ENCODE measurements at regions of chr1 and their contacts with region 1.

Region 1: GRCh38 chr1:20574686-20575540 is 14.0 kb upstream of the CDA start:
- DNase-seq: peak; percentile 80 to 82
- ATAC-seq: peak; percentile 94 to 97
- H3K4me3 ChIP-seq: no peak overlapping the region
- H3K27ac ChIP-seq: peak overlapping the region; percentile 13 to 80; a peak in 4 of 6 replicates
- H3K4me1 ChIP-seq: peaks cover 14% of the 10 kb centered on the region
- CTCF ChIP-seq: peak; percentile 70
- EP300 ChIP-seq: no peak
- POLR2A ChIP-seq: no peak
- RAD21 ChIP-seq: peak; percentile 82 to 90

Region 2: GRCh38 chr1:20589331-20590278 is 14.7 kb after region 1 on chr1:
- CTCF ChIA-PET with region 1: interaction called, 38 read pairs
- POLR2A ChIA-PET with region 1: no interaction called
- DNase-seq: no peak
- ATAC-seq: peak; percentile 35 to 53; a peak in 3 of 6 replicates
- H3K4me3 ChIP-seq: peak overlapping the region; percentile 50
- H3K27ac ChIP-seq: peak overlapping the region; percentile 84 to 92
- H3K4me1 ChIP-seq: peaks cover 47% of the 10 kb centered on the region
- CTCF ChIP-seq: no peak
- EP300 ChIP-seq: no peak
- POLR2A ChIP-seq: no peak
- RAD21 ChIP-seq: no peak

Region 3: DNA sequence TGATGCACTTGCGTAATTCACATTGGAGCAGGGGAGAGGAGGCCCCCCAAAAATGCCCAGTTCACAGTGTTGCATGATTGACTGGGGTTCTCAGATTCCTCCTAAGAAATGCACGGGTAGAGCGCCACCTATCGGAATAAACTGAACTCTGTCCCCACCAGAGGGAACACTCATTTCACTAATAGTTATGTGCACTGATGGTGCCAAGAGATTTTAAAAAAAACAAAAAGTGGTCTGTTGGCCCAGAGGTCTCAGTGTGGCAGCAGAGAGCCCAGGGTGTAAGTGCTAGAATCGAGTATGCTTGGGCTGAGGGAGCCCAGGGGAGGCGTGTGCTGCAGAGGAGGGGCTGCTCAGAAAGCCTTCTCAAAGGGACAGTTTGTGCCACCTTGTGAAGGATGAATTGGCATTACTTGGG is 65.3 kb after region 1 on chr1:
- CTCF ChIA-PET with region 1: interaction called, 32 read pairs
- POLR2A ChIA-PET with region 1: no interaction called
- DNase-seq: peak; percentile 45 to 54
- ATAC-seq: peak; percentile 83 to 85; a peak in 5 of 6 replicates
- H3K4me3 ChIP-seq: no peak overlapping the region
- H3K27ac ChIP-seq: no peak overlapping the region
- H3K4me1 ChIP-seq: peaks cover 3% of the 10 kb centered on the region; the same call in 1 of the 3 replicates
- CTCF ChIP-seq: peak; percentile 83
- EP300 ChIP-seq: no peak
- POLR2A ChIP-seq: no peak
- RAD21 ChIP-seq: peak; percentile 86 to 88

Region 4: GRCh38 chr1:20672265-20672632 is 97.3 kb after region 1 on chr1:
- CTCF ChIA-PET with region 1: no interaction called
- POLR2A ChIA-PET with region 1: no interaction called
- DNase-seq: no peak
- ATAC-seq: no peak
- H3K4me3 ChIP-seq: no peak overlapping the region
- H3K27ac ChIP-seq: no peak overlapping the region
- H3K4me1 ChIP-seq: no peaks in the 10 kb centered on the region
- CTCF ChIP-seq: no peak
- EP300 ChIP-seq: no peak
- POLR2A ChIP-seq: no peak
- RAD21 ChIP-seq: no peak

Measured in A549 (cell line).